ENCODE measurements at regions of chr6 and their contacts with region 1.

Region 1: GRCh38 chr6:40550202-40551101 is 36.7 kb downstream of the LRFN2 start:
- DNase-seq: no peak
- H3K4me3 ChIP-seq: no peak overlapping the region
- H3K27ac ChIP-seq: no peak overlapping the region
- H3K4me1 ChIP-seq: peaks cover 4 to 17% (median 7%) of the 10 kb centered on the region in 4 experiments
- H3K27me3 ChIP-seq: no peaks in the 10 kb centered on the region
- CTCF ChIP-seq: peak in 2 of 3 experiments; percentile 46 to 73; a peak in 3 of 4 replicates
- EP300 ChIP-seq: no peak
- POLR2A ChIP-seq: no peak
- RAD21 ChIP-seq: peak; percentile 24 to 45; a peak in 3 of 4 replicates

Region 2: GRCh38 chr6:40563111-40563510 is 12.7 kb after region 1 on chr6:
- CTCF ChIA-PET with region 1: interaction called, 24 read pairs
- POLR2A ChIA-PET with region 1: interaction called, 6 read pairs
- DNase-seq: no peak
- H3K4me3 ChIP-seq: no peak overlapping the region
- H3K27ac ChIP-seq: no peak overlapping the region
- H3K4me1 ChIP-seq: peaks cover 4 to 14% (median 7%) of the 10 kb centered on the region in 4 experiments
- H3K27me3 ChIP-seq: no peaks in the 10 kb centered on the region
- CTCF ChIP-seq: peak in 1 of 3 experiments; percentile 7; a peak in 1 of 4 replicates
- EP300 ChIP-seq: no peak
- POLR2A ChIP-seq: no peak
- RAD21 ChIP-seq: peak; percentile 0 to 23; a peak in 2 of 4 replicates

Region 3: GRCh38 chr6:40569162-40569910 is 18.9 kb after region 1 on chr6:
- CTCF ChIA-PET with region 1: interaction called, 24 read pairs
- POLR2A ChIA-PET with region 1: no interaction called
- DNase-seq: no peak
- H3K4me3 ChIP-seq: no peak overlapping the region
- H3K27ac ChIP-seq: no peak overlapping the region
- H3K4me1 ChIP-seq: no peaks in the 10 kb centered on the region; a peak in 1 of 7 replicates
- H3K27me3 ChIP-seq: no peaks in the 10 kb centered on the region
- CTCF ChIP-seq: no peak
- EP300 ChIP-seq: no peak
- POLR2A ChIP-seq: no peak
- RAD21 ChIP-seq: no peak

Region 4: DNA sequence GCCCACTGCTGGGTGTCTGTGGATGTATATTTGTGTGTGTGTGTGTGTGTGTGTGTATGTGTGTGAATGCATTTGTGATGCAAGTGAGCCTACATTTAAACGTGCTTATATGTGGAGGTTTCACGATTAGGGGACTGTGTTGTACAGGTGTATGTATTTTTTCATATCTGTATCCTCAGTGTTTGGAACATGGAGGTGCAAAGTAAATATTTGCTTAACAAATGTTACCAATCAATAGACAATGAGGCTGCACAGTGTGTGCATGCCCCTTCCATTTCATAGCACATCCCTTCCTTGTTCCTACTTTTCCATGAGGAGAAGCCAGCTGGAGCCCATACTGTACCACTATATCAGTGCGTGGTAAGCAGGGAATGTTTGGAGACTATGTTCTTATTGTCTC is 310.4 kb after region 1 on chr6:
- CTCF ChIA-PET with region 1: no interaction called
- POLR2A ChIA-PET with region 1: no interaction called
- DNase-seq: no peak
- H3K4me3 ChIP-seq: no peak overlapping the region
- H3K27ac ChIP-seq: no peak overlapping the region
- H3K4me1 ChIP-seq: no peaks in the 10 kb centered on the region
- H3K27me3 ChIP-seq: no peaks in the 10 kb centered on the region; a peak in 1 of 7 replicates
- CTCF ChIP-seq: no peak
- EP300 ChIP-seq: no peak
- POLR2A ChIP-seq: no peak
- RAD21 ChIP-seq: no peak

Measured in H1 (cell line).